ENCODE measurements at regions of chr11 and their contacts with region 1.

Region 1: DNA sequence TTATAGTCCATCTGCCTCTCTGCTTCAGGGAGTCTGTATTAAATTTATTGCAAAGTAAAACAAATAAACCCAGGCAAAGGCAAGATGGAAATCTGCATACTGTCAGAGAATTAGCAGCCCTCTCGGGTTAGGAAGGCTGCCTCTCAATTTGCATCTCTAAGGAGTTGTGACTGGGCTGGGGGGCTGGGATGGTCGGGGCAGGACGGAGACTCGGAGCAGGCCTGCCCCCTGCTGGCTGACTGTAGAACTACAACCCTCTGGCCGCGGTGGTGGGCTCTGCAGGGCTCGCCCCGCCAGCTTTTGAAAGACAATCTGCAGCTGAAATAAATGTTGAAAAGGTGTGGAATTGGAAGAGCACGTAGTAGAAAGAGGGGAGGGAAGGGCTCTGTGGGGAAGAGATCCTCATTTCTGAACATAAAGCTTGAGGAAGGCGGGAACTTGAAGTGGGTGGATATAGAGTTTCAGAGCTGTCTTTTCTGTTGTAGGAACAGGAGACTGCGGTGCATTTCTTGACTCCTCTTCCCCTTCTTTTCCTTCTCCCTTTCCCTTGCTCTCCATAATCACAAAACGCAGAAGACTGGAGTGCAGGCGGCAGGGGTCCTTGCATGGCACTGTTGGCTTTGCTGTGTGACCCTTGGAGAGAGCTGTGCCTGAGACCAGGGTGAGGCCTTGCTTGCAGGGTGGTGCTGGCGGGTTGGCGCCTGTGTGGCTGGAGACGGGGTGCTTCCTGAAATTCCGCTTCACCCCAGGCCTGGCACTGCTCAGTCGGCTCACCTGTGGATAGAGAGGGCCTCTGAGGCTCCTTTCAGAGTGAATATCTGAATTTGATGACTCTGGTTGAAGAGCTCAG is 22.6 kb upstream of the PKNOX2 start:
- DNase-seq: peak; percentile 66
- ATAC-seq: peak; percentile 98
- H3K4me3 Mint-ChIP-seq: no peak overlapping the region
- H3K27ac Mint-ChIP-seq: no peak overlapping the region
- H3K4me1 Mint-ChIP-seq: peaks cover 2% of the 10 kb centered on the region
- H3K27me3 Mint-ChIP-seq: peaks cover 21% of the 10 kb centered on the region
- CTCF ChIP-seq: peak; percentile 98

Region 2: DNA sequence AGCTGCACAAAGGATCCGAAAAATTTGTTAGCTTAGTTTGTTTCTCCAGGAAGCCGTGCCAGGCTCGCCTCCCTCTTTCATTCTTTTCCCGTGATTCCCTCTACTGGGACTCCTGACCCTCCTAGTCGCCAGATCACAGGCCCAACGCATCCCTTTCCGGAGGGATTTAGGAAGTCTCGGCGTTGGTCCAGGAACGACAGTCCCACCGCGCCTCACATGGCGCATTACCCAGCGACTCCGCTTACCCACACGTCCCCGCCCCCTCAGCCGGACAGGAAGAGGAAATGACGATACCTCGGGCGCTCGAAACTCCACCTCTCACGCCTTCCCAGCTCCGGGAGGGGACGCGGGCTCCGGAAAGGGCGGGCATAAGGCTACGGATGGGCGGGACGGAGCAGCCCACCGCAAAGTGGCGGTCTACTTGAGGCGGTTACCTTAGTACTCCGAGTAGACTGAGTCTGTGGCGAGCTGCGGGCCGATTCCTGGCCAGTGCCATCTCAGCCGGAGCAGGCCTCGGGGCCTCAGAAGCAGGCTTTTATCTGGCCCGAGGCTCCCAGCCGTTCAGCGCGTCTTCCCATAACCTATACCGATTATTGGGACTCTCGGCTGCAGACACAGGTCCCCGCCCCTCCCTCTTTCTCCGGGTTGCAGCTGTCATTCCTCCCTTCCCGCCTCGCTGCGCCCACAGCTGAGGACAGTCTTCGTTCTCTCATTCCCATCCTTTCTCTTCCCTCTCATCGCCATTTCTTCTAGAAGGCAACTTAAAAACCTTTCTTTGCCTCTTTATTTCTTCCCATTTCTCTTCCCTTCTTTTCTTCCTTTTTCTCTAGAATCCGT is 187.9 kb before region 1 on chr11 and contains the start of gene CCDC15:
- CTCF ChIA-PET with region 1: interaction called, 16 read pairs
- POLR2A ChIA-PET with region 1: no interaction called
- intact Hi-C with region 1: no loop called
- DNase-seq: peak; percentile 98
- ATAC-seq: peak; percentile 97
- H3K4me3 Mint-ChIP-seq: no peak within 1 kb of the TSS
- H3K27ac Mint-ChIP-seq: no peak within 1 kb of the TSS
- H3K4me1 Mint-ChIP-seq: peaks cover 9% of the 10 kb centered on the region
- H3K27me3 Mint-ChIP-seq: no peaks in the 10 kb centered on the region
- CTCF ChIP-seq: no peak
- total RNA-seq, gene CCDC15: 4.2 to 4.8 TPM

Region 3: DNA sequence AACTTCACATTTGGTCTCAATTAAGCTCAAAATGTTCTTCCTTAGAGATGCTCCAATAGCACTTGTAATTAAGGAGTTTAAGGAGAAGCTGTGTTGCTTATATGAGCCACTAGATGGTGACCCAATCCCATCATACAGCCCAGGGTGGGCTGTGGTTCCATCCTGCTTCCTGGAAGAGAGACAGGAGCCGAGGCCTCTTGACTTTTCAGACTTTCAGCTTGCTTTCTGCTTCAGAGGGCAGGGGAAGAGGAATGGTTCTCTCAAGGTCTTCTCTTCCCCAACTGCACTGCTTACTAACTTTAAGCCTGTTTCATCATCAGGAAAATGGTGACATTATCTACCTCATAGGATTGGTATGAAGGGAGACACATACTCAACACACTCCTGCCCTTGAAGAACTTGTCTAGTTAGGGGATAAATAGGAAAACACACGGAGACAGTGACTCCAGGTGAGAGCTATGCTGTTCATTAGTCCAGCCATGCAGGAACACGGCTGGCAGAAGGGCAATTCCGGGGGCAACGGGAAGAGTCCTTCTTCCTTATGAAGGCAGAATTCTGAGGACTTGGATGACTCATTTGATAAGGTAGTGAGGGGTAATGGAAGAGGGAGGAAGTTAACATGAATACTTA is 50.5 kb before region 1 on chr11:
- CTCF ChIA-PET with region 1: interaction called, 35 read pairs
- POLR2A ChIA-PET with region 1: no interaction called
- intact Hi-C with region 1: loop called (anchors 5 kb)
- DNase-seq: peak; percentile 19
- ATAC-seq: peak; percentile 72
- H3K4me3 Mint-ChIP-seq: no peak overlapping the region
- H3K27ac Mint-ChIP-seq: no peak overlapping the region
- H3K4me1 Mint-ChIP-seq: peaks cover 5% of the 10 kb centered on the region
- H3K27me3 Mint-ChIP-seq: no peaks in the 10 kb centered on the region
- CTCF ChIP-seq: peak; percentile 65

Region 4: GRCh38 chr11:125117429-125117828 is 24.5 kb before region 1 on chr11:
- CTCF ChIA-PET with region 1: interaction called, 33 read pairs
- POLR2A ChIA-PET with region 1: no interaction called
- intact Hi-C with region 1: no loop called
- DNase-seq: no peak
- ATAC-seq: no peak
- H3K4me3 Mint-ChIP-seq: no peak overlapping the region
- H3K27ac Mint-ChIP-seq: no peak overlapping the region
- H3K4me1 Mint-ChIP-seq: peaks cover 1% of the 10 kb centered on the region
- H3K27me3 Mint-ChIP-seq: peaks cover 13% of the 10 kb centered on the region
- CTCF ChIP-seq: no peak

Region 5: GRCh38 chr11:125188021-125188420 is 46.1 kb after region 1 on chr11:
- CTCF ChIA-PET with region 1: interaction called, 10 read pairs
- POLR2A ChIA-PET with region 1: no interaction called
- intact Hi-C with region 1: no loop called
- DNase-seq: no peak
- ATAC-seq: no peak
- H3K4me3 Mint-ChIP-seq: no peak overlapping the region
- H3K27ac Mint-ChIP-seq: no peak overlapping the region
- H3K4me1 Mint-ChIP-seq: no peaks in the 10 kb centered on the region
- H3K27me3 Mint-ChIP-seq: peaks cover 48% of the 10 kb centered on the region
- CTCF ChIP-seq: no peak

Measured in activated CD8-positive, alpha-beta T cell treated with anti-CD3 and anti-CD28 coated beads for 36 hours (primary cell).